Gastrocnemius medialis (tissue), 4 donors: ENCODE measurements at regions of chr4 and their contacts with region 1.

Region 1: GRCh38 chr4:162497564-162498167 is 333.9 kb upstream of the FSTL5 start:
- DNase-seq: no peak
- ATAC-seq: peak; percentile 78 to 80
- H3K4me3 ChIP-seq: peak overlapping the region in 2 of 4 donors; percentile 16 to 37
- H3K27ac ChIP-seq: no peak overlapping the region
- H3K4me1 ChIP-seq: peaks cover 0 to 7% of the 10 kb centered on the region in 2 donors
- H3K27me3 ChIP-seq: no peaks in the 10 kb centered on the region
- CTCF ChIP-seq: peak; percentile 73 to 91 (median 81)
- POLR2A ChIP-seq: no peak

Region 2: DNA sequence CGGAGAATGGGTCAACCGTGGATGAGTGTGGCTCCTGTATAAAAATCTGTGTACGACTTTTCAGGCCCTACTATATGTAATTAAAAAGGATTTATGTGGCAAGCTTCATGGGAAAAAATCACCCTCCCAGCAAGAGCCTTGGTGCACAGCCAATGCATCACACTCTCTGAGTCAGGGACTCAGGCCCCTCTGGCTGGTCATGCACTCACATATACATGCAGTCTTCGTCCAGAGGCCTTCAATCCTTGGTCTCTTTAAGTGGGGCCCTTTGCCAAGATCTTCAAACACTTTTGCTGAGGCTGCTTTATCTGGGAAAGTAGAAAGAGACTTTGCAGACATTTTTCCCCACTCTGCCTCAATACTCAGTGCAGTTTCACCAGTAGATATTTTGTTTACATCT is 22.4 kb before region 1 on chr4:
- in situ Hi-C with region 1: no loop called
- intact Hi-C with region 1: no loop called
- DNase-seq: no peak
- ATAC-seq: no peak
- H3K4me3 ChIP-seq: no peak overlapping the region
- H3K27ac ChIP-seq: no peak overlapping the region
- H3K4me1 ChIP-seq: no peaks in the 10 kb centered on the region
- H3K27me3 ChIP-seq: no peaks in the 10 kb centered on the region
- CTCF ChIP-seq: no peak
- POLR2A ChIP-seq: no peak

Region 3: GRCh38 chr4:163042306-163042705 is 544.6 kb after region 1 on chr4:
- in situ Hi-C with region 1: loop called in 1 of 4 experiments (anchors 25 kb)
- intact Hi-C with region 1: loop called (anchors 5 kb)
- DNase-seq: no peak
- ATAC-seq: no peak
- H3K4me3 ChIP-seq: no peak overlapping the region
- H3K27ac ChIP-seq: no peak overlapping the region
- H3K4me1 ChIP-seq: no peaks in the 10 kb centered on the region
- H3K27me3 ChIP-seq: no peaks in the 10 kb centered on the region
- CTCF ChIP-seq: no peak
- POLR2A ChIP-seq: no peak

Region 4: DNA sequence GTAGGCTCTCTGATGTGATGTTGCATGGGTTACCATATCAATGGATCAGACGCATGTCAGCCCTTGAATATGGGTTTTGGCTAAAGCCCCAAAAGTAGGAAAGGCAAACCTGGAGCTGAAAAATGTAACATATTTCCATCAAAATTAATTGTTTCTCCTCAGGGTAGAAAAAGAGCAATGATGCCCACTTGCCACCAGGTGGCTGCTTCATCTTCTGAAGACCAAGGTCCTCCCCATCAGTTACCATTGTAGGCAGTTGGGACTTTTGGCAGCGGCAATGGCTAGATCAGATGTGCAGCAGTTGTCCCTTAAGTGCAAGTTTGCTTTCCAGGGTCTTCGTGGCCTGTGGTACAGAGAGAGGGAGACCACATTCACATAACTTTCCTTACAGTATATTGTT is 550.8 kb after region 1 on chr4:
- in situ Hi-C with region 1: loop called in 2 of 4 experiments (anchors 25 kb)
- intact Hi-C with region 1: no loop called
- DNase-seq: no peak
- ATAC-seq: no peak
- H3K4me3 ChIP-seq: no peak overlapping the region
- H3K27ac ChIP-seq: no peak overlapping the region
- H3K4me1 ChIP-seq: no peaks in the 10 kb centered on the region
- H3K27me3 ChIP-seq: no peaks in the 10 kb centered on the region
- CTCF ChIP-seq: peak in 2 of 5 experiments; percentile 14 to 37
- POLR2A ChIP-seq: no peak

Region 5: DNA sequence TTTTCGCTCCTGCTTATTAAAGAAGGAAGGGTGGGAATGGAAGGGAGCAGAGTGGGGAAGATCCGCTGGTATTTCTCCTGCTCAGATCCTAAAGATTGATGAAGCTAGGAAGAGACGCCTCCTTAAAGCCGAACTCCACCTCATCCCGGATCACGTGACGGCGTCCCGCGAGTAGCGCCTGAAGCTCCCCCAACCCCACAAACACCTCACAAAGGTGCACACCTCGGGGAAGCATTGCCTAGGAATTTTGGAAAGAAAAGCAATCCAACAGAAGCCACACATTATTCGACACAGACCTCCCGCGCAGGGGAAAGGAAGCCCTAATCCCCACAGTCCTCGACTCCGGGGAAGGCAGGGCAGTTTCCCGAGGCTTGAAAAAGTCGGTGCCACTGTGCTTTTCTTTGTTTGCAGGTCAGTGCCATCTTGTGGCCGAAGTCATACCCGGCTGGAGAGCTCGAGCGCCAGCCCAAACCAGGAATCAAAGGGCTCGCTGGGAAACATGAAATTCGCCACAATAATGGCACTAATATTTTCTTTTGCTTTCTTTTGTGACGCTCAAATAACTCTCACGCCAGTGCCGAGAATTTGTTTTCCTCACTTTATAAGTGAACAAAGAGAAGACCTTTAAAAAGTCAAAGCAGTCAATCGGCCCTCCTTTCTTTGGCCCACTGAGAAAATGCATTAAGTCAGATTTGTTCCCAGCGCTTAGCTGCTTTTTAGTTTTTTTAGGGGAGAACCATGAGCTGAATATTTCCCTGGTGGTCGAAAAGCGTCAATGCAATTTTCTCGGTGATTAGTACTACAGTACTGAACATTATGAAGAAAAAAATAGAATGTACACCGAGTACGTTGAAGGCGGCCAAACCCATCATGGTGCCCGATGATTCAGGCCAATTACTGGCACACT is 835.1 kb after region 1 on chr4 and contains the start of gene NPY1R:
- in situ Hi-C with region 1: loop called (anchors 10 to 25 kb)
- intact Hi-C with region 1: loop called (anchors 1 kb)
- DNase-seq: peak; percentile 43 to 47
- ATAC-seq: peak; percentile 94 to 95
- H3K4me3 ChIP-seq: peak within 1 kb of the TSS; percentile 55 to 91 (median 68)
- H3K27ac ChIP-seq: peak within 1 kb of the TSS in 2 of 4 donors; percentile 8 to 17
- H3K4me1 ChIP-seq: peaks cover 5 to 14% of the 10 kb centered on the region in 2 donors
- H3K27me3 ChIP-seq: peaks cover 0 to 7% (median 6%) of the 10 kb centered on the region in 3 donors
- CTCF ChIP-seq: peak; percentile 42 to 79 (median 53)
- POLR2A ChIP-seq: no peak
- total RNA-seq, gene NPY1R: 0.40 to 3.1 (median 1.3) TPM

Region 6: DNA sequence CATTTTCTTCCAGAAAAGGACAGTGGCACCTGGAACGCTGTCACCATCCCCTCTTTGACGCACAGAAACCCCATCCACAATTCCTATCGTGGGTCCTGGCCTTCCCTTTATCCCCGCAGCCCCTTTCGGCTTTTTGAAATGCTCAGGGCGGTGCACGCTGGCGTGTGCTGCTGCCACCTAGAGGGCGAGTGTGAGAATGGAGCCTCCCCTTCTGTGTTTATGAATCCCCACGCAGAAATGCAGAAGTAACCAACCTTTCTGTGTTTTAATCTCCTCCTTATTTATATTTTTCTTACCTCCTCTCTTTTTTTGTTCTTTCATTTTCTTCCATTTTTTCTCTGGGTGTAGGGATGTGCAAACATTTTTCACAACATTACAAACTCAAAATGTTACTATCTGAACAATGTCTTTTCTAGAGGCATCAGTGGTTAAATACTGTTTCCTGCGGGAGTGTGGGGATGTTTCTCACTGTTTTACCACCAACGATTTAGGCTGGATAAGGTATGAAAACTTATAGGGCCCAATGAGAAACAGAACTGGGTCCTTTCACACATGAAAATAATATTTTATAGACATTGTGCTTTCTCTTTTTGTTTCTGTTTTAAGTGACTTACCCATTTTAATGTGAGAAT is 1046.9 kb after region 1 on chr4:
- in situ Hi-C with region 1: loop called in 1 of 4 experiments (anchors 25 kb)
- intact Hi-C with region 1: loop called (anchors 5 kb)
- DNase-seq: peak in 1 of 2 donors; percentile 15
- ATAC-seq: peak; percentile 36 to 68
- H3K4me3 ChIP-seq: peak overlapping the region in 3 of 4 donors; percentile 27 to 45 (median 45)
- H3K27ac ChIP-seq: no peak overlapping the region
- H3K4me1 ChIP-seq: no peaks in the 10 kb centered on the region
- H3K27me3 ChIP-seq: no peaks in the 10 kb centered on the region
- CTCF ChIP-seq: peak; percentile 38 to 90 (median 62)
- POLR2A ChIP-seq: no peak